Gastrocnemius medialis (tissue), 4 donors: ENCODE measurements at regions of chr1 and their contacts with region 1.

Region 1: DNA sequence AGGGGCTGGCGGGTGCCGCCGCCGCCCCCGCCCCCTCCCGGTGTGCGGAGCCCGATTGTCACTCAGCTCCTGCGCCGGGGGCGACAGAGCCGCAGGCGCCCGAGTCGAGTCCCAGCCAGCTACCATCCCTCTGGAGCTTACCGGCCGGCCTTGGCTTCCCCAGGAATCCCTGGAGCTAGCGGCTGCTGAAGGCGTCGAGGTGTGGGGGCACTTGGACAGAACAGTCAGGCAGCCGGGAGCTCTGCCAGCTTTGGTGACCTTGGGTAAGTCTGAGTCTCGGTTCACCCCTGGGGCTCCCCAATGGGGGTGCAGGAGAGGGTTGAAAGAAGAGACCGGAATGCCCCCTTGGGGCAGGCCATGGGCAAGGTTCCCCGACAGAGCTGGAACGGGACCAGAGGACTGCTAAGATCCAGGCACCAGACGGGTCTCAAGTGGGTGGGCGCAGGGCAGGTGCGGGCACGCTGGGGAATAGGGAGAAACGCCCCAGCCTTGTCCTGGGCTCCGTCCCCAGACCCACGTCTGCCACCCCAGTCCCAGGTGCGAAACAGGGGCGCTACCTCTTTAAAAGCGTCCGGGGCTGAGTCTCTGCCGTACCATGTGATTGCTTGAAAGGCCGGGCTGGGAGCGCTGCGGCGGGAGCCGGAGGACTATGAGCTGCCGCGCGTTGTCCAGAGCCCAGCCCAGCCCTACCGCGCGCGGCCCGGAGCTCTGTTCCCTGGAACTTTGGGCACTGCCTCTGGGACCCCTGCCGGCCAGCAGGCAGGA is at the start of gene ADORA1:
- DNase-seq: peak; percentile 47 to 69
- ATAC-seq: peak; percentile 90 to 92
- H3K4me3 ChIP-seq: peak within 1 kb of the TSS; percentile 50 to 78 (median 60)
- H3K27ac ChIP-seq: peak within 1 kb of the TSS; percentile 58 to 65 (median 62)
- H3K4me1 ChIP-seq: peaks cover 28 to 41% of the 10 kb centered on the region in 2 donors
- H3K27me3 ChIP-seq: no peaks in the 10 kb centered on the region
- CTCF ChIP-seq: peak in 2 of 5 experiments; percentile 8 to 11
- POLR2A ChIP-seq: no peak
- total RNA-seq, gene ADORA1: 0.25 to 5.6 (median 1.7) TPM

Region 2: DNA sequence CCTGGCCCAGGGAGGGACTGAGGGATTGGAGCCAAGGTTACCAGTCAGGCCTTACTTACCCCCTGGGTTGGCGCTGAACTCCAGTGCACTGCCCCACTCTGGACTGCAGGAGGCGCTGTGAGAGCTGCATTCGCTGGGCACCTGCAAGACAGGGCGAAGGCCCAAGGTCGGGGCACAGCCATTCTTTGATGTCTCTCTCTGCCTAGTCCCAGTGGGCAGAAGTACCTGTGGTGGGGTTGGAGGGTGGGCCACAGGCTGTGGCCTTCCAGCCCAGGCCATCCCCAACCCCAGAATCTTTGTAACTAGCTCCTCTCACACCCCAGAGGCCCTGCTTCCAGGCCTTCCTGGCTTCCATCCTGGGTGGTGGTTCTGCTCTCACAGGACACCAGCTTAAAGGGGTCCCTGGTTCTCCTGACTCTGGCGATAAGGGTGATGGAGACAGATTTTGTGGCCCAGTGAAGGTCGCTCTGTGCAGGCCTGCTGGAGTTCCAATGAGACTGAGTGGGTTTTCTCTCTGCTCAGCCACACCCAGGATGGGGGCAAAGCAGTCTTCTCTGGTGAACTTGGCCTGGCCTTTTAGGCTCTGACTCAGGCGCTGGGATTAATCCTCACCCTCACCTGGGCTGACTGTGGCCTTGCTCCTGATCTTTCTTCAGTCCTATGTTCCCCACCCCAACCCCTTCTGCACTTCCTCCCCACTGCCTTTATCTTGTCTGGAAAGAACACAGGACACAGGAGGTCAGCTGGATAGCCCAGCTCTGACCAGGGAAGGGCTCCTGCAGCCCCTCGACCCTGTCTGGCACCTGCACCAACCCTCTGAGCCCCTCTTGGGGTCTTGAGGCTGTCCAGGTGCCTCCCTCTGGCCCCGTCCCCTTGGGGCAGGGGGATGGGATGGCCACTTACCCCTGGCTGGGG is 43.0 kb before region 1 on chr1:
- in situ Hi-C with region 1: no loop called
- intact Hi-C with region 1: loop called (anchors 1 kb)
- DNase-seq: peak; percentile 32 to 89
- ATAC-seq: peak; percentile 37 to 55
- H3K4me3 ChIP-seq: peak overlapping the region; percentile 58 to 78 (median 67)
- H3K27ac ChIP-seq: peak overlapping the region; percentile 97 to 100 (median 98)
- H3K4me1 ChIP-seq: peaks cover 49 to 51% of the 10 kb centered on the region in 2 donors
- H3K27me3 ChIP-seq: no peaks in the 10 kb centered on the region
- CTCF ChIP-seq: peak; percentile 72 to 90 (median 88)
- POLR2A ChIP-seq: no peak